CD4-positive, alpha-beta T cell (primary cell): ENCODE measurements at regions of chr12 and their contacts with region 1.

Region 1: DNA sequence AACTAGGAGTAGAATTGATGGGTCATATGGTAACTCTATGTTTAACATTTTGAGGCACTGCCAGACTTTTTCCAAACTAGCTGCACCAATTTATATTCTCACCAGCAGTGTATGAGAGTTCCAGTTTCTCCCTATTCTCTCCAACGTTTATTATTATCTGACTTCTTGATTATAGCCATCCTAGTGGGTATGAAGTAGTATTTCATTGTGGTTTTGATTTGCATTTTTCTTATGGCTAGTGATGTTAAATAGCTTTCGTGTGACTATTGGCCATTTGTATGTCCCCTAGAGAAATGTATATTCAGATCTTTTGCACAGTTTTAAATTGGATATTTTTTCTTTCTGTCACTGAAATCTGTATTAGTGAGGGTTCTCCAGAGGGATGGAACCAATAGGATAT is 37.8 kb downstream of the HELB start:
- DNase-seq: no peak
- ATAC-seq: no peak
- H3K4me3 ChIP-seq: no peak overlapping the region
- H3K4me3 Mint-ChIP-seq: no peak overlapping the region
- H3K27ac ChIP-seq: no peak overlapping the region
- H3K27ac Mint-ChIP-seq: no peak overlapping the region
- H3K4me1 ChIP-seq: peaks cover 1% of the 10 kb centered on the region
- H3K4me1 Mint-ChIP-seq: peaks cover 22% of the 10 kb centered on the region
- H3K27me3 ChIP-seq: no peaks in the 10 kb centered on the region
- H3K27me3 Mint-ChIP-seq: no peaks in the 10 kb centered on the region
- CTCF ChIP-seq: no peak

Region 2: DNA sequence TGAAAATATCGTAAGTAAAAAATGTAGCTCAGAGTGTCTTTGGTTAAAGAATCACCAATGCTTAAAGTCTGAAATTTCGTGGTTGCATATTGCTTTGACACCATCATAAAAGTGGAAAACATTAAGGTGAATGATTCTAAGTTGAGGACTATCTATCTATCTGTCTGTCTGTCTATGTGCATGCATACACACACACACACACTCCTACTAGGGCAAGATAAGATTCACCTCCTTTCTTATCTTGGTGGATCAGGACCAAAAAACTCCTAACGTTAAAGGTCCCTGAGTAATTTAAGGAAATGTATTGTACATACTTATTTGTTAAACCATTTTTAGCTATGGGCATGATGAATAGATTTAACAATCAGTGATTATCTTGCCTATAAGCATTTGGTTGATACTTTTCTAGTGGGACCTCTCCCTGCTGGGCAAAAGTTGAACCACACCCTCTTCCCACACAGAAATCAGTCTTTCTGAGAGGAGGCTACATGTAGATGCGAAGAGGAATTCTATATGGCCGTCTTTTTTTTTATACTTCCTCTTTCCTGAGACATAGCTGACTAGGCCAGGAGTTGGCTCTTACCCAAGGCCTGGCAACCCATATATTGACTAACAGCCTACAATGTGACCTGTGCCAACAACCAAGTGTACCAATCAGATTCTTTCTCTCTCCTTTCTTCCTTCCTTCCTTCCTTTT is 190.3 kb before region 1 on chr12:
- CTCF ChIA-PET with region 1: no interaction called
- POLR2A ChIA-PET with region 1: no interaction called
- intact Hi-C with region 1: no loop called
- DNase-seq: peak in 2 of 14 experiments; percentile 35 to 51
- ATAC-seq: peak; percentile 32
- H3K4me3 ChIP-seq: no peak overlapping the region
- H3K4me3 Mint-ChIP-seq: no peak overlapping the region
- H3K27ac ChIP-seq: no peak overlapping the region
- H3K27ac Mint-ChIP-seq: peak overlapping the region; percentile 45
- H3K4me1 ChIP-seq: no peaks in the 10 kb centered on the region
- H3K4me1 Mint-ChIP-seq: peaks cover 22% of the 10 kb centered on the region
- H3K27me3 ChIP-seq: no peaks in the 10 kb centered on the region
- H3K27me3 Mint-ChIP-seq: no peaks in the 10 kb centered on the region
- CTCF ChIP-seq: no peak

Region 3: DNA sequence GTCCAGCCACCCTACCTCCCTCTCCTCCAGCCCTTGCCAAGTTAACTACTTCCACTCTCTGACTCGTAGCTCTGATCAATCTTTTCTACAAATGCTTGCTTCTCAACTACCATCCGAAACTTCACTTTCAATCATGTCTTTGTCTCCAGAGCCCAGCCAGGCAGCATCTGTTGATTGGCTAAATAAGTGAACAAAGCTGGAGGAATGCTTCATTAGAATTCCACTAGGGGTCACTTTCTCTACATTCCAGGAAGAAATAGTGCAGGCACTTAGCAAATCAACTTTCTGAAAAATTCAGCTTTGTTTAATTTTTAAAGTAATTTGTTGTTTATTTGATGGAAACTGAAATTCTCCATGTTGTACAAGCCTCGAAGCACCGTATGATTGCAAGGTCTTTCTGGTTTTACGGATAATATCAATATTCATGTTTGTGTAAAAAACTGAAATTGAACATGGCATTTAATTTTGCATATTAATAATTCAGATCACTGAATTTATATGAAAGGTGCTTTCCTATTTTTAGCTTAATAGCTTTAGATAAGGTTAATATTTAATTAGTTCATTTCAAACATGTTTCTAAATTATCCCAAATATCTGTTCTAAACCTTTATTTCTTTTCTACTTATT is 70.3 kb before region 1 on chr12:
- CTCF ChIA-PET with region 1: interaction called, 4 read pairs
- POLR2A ChIA-PET with region 1: no interaction called
- intact Hi-C with region 1: loop called in 1 of 2 experiments (anchors 10 kb)
- DNase-seq: peak in 5 of 14 experiments; percentile 7 to 72 (median 67)
- ATAC-seq: peak; percentile 73
- H3K4me3 ChIP-seq: no peak overlapping the region
- H3K4me3 Mint-ChIP-seq: no peak overlapping the region
- H3K27ac ChIP-seq: no peak overlapping the region
- H3K27ac Mint-ChIP-seq: no peak overlapping the region
- H3K4me1 ChIP-seq: peaks cover 20% of the 10 kb centered on the region
- H3K4me1 Mint-ChIP-seq: peaks cover 6% of the 10 kb centered on the region
- H3K27me3 ChIP-seq: no peaks in the 10 kb centered on the region
- H3K27me3 Mint-ChIP-seq: no peaks in the 10 kb centered on the region
- CTCF ChIP-seq: peak; percentile 83